ENCODE measurements at regions of chr3 and their contacts with region 1.

Region 1: DNA sequence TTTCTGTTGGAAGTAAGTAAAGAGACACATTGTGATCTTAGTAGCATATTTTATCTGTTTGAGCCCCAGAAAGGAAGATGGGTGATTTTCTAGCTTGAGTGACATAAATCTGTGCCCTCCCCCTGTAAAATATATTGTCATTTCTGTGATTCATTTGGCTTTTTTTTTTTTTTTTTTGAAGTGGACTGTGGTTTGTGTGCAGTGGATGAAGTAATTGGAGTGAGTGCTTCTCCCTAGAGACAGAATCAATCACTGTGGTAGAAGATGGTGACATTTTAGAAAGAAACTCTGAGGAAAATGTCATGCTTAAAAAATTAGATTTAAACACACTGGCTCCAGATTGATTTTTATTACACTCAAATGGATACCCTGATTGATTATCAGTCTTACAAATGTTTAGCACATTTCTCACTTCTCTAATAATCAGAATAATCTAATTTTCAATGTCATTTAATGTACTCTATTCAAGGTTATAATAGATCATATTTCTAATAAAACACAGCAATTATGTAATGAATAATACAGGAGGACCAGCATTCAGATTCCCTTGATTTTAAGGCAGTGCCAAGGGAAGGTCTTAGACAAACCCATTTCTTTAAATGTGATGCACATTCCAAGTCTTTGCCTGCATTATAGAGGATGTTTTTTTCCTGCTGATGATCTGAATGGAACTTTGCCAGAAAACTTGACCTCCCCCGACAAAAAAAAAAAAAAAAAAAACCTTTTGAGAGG is 116.6 kb downstream of the TOP2B start:
- DNase-seq: no peak
- H3K4me3 ChIP-seq: no peak overlapping the region
- H3K27me3 ChIP-seq: no peaks in the 10 kb centered on the region
- CTCF ChIP-seq: no peak

Region 2: GRCh38 chr3:25558111-25558510 is 10.0 kb after region 1 on chr3:
- CTCF ChIA-PET with region 1: interaction called, 13 read pairs
- POLR2A ChIA-PET with region 1: no interaction called
- DNase-seq: no peak
- H3K4me3 ChIP-seq: no peak overlapping the region
- H3K27me3 ChIP-seq: no peaks in the 10 kb centered on the region; the same call in 1 of the 2 replicates
- CTCF ChIP-seq: no peak

Region 3: DNA sequence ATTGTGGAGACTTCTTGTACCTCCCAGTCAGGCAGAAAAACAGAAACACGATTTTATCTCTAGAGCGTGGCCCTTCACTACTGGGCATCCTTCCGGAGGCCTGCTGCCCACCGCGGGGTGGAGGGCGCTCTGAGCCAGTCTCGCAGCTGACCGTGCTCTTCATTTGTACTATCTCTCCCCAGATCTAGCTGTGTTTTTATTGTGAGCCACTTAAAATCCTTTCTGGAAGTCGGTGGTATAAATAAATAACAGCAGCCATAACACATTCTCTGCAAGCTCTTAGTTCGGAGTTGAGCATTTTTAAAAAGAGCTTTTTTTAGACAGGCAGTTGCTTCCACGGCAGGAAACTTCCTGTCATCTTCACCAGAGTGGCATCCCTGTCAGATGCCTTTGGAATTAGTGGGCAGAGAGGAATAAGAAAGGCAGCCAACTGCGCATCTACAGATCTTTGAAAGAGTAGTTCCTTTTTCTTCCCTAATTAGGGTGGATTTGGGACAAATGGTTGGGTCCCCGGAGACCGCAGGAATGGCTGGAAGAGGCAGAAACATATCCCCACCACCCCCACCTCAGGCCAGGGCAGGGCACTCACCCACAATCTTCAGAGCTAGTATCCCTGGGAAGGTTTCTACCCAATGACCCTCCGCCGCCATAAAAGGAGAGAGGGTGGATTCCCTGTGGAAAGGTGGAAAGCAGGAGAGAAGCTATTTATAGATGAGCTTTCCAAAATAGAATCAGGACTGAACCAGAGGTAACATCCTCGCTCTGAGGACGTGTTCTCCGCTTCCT is 25.5 kb after region 1 on chr3:
- CTCF ChIA-PET with region 1: no interaction called
- POLR2A ChIA-PET with region 1: no interaction called
- DNase-seq: peak; percentile 57
- H3K4me3 ChIP-seq: no peak overlapping the region
- H3K27me3 ChIP-seq: no peaks in the 10 kb centered on the region
- CTCF ChIP-seq: no peak

Measured in BJ (cell line).